Activated CD8-positive, alpha-beta T cell treated with anti-CD3 and anti-CD28 coated beads for 36 hours (primary cell): ENCODE measurements at regions of chr22 and their contacts with region 1.

Region 1: GRCh38 chr22:36331306-36331911 is 56.4 kb downstream of the MYH9 start:
- DNase-seq: peak; percentile 90
- ATAC-seq: peak; percentile 51
- H3K4me3 Mint-ChIP-seq: peak overlapping the region; percentile 90
- H3K27ac Mint-ChIP-seq: peak overlapping the region; percentile 100
- H3K4me1 Mint-ChIP-seq: peaks cover 97% of the 10 kb centered on the region
- H3K27me3 Mint-ChIP-seq: no peaks in the 10 kb centered on the region
- CTCF ChIP-seq: no peak

Region 2: GRCh38 chr22:36317658-36318271 is 13.6 kb before region 1 on chr22:
- CTCF ChIA-PET with region 1: interaction called, 4 read pairs
- POLR2A ChIA-PET with region 1: interaction called, 13 read pairs
- intact Hi-C with region 1: no loop called
- DNase-seq: no peak
- ATAC-seq: no peak
- H3K4me3 Mint-ChIP-seq: no peak overlapping the region
- H3K27ac Mint-ChIP-seq: peak overlapping the region; percentile 33
- H3K4me1 Mint-ChIP-seq: peaks cover 4% of the 10 kb centered on the region
- H3K27me3 Mint-ChIP-seq: no peaks in the 10 kb centered on the region
- CTCF ChIP-seq: no peak

Region 3: DNA sequence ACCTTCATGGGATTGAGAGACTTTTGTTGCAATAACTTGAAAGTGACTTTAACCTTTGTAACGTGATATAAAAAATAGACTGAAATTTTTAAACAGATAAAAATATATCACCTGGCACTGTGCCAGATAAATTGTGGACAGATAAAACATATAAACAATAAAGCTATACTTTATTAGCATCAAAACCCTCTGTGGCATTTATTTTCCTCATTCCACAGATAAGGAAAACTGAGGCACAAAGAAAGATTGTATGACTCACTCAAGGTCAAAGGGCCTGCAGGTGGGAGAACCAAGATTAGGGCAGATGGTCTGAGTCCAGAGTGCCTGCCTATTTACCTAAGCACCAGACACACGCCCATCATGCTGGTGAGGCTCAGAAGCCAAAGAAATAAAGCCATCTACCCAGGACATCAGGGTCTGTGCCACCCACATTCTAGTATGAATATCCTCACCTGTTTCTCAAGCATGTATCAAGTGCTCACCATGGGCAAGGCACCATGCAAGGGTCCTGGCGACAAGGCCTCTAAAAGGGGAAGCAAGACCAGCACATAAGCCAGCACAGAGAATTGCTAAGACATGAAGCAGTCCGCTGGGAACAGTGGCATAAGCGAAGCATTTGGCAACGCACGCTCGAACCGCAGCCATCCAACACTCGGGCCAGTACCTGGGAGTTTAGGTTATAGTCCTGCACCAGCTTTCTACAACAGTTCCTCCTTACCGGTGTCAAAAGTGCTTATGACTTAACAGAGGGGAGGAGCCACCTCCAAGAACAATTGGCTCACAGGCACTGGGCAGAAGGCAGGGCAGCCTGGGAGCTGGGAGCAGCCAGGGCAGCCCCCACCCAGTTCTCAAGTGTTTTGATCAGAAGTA is 38.7 kb after region 1 on chr22:
- CTCF ChIA-PET with region 1: interaction called, 28 read pairs
- POLR2A ChIA-PET with region 1: interaction called, 1,125 read pairs
- intact Hi-C with region 1: loop called (anchors 5 kb)
- DNase-seq: peak; percentile 58
- ATAC-seq: peak; percentile 22
- H3K4me3 Mint-ChIP-seq: peak overlapping the region; percentile 76
- H3K27ac Mint-ChIP-seq: peak overlapping the region; percentile 98
- H3K4me1 Mint-ChIP-seq: peaks cover 91% of the 10 kb centered on the region
- H3K27me3 Mint-ChIP-seq: no peaks in the 10 kb centered on the region
- CTCF ChIP-seq: no peak

Region 4: DNA sequence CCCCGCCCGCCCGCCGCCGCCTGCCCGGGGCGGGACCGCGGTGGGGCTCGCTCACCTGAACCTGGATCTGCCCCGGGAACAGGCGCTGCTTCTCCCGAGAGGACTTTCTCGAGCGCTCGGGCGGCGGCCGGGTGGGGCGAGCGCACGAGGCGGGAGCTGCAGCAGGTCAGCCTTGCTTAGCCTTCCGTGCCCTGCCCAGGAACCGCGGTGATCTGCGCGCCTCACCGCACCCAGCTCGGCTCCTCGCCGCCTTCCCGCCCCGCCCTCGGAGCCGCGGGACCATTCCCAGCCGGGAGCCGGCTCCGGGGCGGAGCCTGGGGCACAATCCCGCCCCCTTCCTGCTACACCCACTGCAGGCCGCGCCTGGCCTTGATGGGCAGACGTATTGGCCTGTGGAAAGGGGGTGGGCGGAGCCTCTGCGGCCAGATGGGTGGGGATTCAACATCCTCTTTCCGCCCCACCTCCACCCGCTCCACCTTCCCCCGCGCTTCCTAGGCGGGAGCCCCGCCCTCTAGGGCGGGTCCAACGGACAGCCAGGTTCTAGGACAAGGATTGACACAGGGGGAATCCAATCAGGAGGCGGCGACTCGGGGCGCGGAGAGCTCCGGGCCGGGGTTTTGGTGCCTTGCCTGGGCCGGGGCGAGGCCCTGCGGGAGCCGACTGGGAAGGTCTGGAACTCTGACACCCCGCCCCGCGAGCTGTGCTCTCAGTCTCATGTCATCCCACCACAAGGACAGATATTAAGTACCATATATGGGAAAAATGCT is 56.5 kb after region 1 on chr22 and contains the start of gene MYH9:
- CTCF ChIA-PET with region 1: interaction called, 14 read pairs
- POLR2A ChIA-PET with region 1: interaction called, 1,125 read pairs
- intact Hi-C with region 1: no loop called
- DNase-seq: peak; percentile 100
- ATAC-seq: peak; percentile 84
- H3K4me3 Mint-ChIP-seq: peak within 1 kb of the TSS; percentile 92
- H3K27ac Mint-ChIP-seq: peak within 1 kb of the TSS; percentile 96
- H3K4me1 Mint-ChIP-seq: peaks cover 27% of the 10 kb centered on the region
- H3K27me3 Mint-ChIP-seq: no peaks in the 10 kb centered on the region
- CTCF ChIP-seq: no peak
- total RNA-seq, gene MYH9: 624 to 679 TPM

Region 5: DNA sequence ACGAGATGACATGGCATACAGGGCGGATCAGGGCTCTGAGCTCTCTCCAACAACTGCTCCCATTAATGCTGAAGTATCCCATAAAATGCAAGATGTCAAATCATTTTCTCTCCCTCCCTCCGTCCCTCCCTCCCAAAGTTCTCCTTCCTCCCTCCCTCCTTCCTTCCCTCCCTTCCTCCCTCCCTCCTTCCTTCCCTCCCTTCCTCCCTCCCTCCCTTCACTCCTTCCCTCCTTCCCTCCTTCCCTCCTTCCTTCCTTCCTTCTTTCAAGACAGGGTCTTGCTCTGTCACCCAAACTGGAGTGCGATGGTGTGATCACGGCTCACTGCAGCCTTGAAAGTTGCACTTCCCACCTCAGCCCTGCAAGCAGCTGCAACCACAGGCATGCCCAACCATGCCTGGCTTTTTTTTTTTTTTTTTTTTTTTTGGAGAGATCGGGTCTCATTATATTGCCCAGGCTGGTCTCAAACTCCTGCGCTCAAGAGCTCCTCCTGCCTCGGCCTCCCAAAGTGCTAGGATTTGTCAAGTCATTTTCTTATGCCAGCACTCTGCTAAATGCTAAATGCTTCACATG is 111.9 kb after region 1 on chr22:
- CTCF ChIA-PET with region 1: no interaction called
- POLR2A ChIA-PET with region 1: no interaction called
- intact Hi-C with region 1: no loop called
- DNase-seq: no peak
- ATAC-seq: no peak
- H3K4me3 Mint-ChIP-seq: no peak overlapping the region
- H3K27ac Mint-ChIP-seq: no peak overlapping the region
- H3K4me1 Mint-ChIP-seq: peaks cover 30% of the 10 kb centered on the region
- H3K27me3 Mint-ChIP-seq: no peaks in the 10 kb centered on the region
- CTCF ChIP-seq: no peak

Region 6: DNA sequence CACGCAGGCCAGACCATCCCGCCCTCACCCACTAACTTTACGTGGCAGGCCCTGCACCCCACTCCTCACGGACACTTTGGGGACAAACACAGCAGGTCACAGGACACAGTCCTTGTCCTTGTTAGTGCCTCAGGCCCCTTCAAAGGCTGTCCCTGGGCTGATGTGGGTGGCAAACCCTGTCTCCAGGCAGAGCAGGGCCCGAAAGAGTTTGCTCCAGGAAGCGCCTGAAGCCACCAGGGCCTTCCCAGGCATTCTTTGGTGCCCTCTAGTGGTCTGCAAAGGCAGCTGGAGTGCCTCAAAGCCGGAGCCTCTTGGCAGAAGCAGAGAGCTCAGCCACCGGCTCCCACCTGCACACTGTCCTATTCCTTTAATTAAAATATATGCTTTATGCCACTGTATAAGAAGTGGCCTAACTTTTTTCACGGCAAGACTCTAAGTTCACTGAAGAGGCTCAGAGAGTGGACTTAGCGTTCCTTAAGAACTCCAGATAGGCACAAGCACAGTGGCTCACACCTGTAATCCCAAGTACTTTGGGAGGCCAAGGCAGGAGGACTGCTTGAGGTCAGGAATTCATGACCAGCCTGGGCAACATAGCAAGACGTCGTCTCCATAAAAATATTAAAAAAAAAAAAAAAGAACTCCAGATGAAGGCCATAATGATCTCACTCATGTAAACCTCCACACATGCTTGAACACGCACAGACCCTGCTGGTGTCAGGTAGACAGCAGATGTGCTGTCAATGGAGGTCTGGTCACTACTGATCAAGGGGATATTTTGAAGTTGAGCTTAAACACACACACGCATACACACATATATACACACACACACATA is 139.0 kb after region 1 on chr22:
- CTCF ChIA-PET with region 1: interaction called, 31 read pairs
- POLR2A ChIA-PET with region 1: interaction called, 4 read pairs
- intact Hi-C with region 1: no loop called
- DNase-seq: peak; percentile 86
- ATAC-seq: peak; percentile 95
- H3K4me3 Mint-ChIP-seq: no peak overlapping the region
- H3K27ac Mint-ChIP-seq: peak overlapping the region; percentile 57
- H3K4me1 Mint-ChIP-seq: peaks cover 28% of the 10 kb centered on the region
- H3K27me3 Mint-ChIP-seq: no peaks in the 10 kb centered on the region
- CTCF ChIP-seq: peak; percentile 93